Activated CD4-positive, alpha-beta T cell treated with anti-CD3 and anti-CD28 coated beads, Interleukin-2, amount 10 ng/mL, durations not matched to agents 7 days and 5 days (primary cell): ENCODE measurements at regions of chr1 and their contacts with region 1.

Region 1: GRCh38 chr1:109397538-109398342 is at the start of gene SORT1:
- DNase-seq: peak; percentile 39
- H3K4me3 Mint-ChIP-seq: peak within 1 kb of the TSS; percentile 75
- H3K27ac Mint-ChIP-seq: no peak within 1 kb of the TSS
- H3K4me1 Mint-ChIP-seq: peaks cover 10% of the 10 kb centered on the region
- H3K27me3 Mint-ChIP-seq: peaks cover 42% of the 10 kb centered on the region
- total RNA-seq, gene SORT1: 1.5 to 1.9 TPM

Region 2: DNA sequence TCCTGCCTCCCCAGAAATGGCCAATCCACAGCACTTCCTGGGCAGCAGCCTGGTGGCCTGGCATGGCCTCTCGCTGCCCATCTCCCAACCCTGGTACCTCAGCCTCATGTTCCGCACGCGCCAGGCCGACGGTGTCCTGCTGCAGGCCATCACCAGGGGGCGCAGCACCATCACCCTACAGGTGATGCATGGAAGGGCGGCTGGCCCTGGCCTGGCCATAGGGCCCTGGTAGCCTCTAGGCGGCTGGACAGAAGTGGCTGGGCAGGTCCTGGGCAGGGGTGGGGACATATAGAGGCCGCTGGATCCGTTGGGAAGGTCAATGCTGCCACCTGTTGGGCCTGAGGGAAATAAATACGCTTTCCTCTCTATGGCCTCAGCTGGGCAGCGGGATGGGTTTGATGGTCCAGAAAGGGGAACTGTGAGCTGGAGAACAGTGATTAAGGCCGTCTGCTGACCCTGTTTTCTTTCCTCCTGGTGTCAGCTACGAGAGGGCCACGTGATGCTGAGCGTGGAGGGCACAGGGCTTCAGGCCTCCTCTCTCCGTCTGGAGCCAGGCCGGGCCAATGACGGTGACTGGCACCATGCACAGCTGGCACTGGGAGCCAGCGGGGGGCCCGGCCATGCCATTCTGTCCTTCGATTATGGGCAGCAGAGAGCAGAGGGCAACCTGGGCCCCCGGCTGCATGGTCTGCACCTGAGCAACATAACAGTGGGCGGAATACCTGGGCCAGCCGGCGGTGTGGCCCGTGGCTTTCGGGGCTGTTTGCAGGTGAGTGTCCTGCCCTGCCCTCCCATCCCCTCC is 133.9 kb before region 1 on chr1:
- CTCF ChIA-PET with region 1: interaction called, 16 read pairs
- POLR2A ChIA-PET with region 1: no interaction called
- DNase-seq: peak; percentile 82
- H3K4me3 Mint-ChIP-seq: no peak overlapping the region
- H3K27ac Mint-ChIP-seq: no peak overlapping the region
- H3K4me1 Mint-ChIP-seq: peaks cover 3% of the 10 kb centered on the region
- H3K27me3 Mint-ChIP-seq: no peaks in the 10 kb centered on the region

Region 3: DNA sequence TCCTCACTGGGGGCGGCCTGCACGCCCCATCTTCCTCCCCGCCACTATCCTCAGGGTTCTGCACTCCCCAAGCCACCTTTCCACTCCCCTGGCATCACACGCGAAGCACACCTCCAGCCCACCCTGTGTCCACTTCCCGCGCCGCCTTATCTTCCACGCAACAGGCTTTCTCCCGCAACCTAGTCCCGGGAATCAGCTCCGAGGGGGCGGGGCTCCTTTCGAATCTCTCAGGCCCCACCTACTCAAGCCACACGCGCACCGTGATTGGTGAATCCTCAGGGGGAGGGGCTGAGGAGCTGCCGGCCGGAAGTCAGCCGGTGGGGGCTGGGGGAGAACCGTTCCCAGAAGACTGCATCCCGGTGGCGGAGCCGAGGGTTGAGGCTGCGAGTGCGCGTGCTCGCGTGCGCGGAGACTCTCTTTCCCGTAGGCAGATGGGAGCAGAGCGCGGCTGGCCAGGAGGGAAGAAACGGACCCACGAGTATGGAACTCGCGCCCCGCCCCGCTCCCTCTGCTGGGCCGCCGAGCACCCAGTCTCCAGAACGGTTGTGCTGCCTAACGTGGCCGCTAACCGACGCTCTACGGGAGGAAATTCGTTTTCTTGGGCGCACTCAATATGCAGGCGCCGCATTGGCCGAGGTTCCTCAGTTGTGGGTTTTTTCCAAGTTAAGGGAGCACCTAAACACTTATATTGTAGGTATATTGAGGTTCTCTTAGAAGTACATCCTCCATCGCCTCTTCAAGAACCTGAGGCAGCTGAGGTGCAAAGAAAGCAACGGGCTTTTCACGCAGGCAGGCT is 114.6 kb before region 1 on chr1 and contains the start of gene PSRC1:
- CTCF ChIA-PET with region 1: interaction called, 50 read pairs
- POLR2A ChIA-PET with region 1: no interaction called
- DNase-seq: peak; percentile 93
- H3K4me3 Mint-ChIP-seq: peak within 1 kb of the TSS; percentile 100
- H3K27ac Mint-ChIP-seq: peak within 1 kb of the TSS; percentile 96
- H3K4me1 Mint-ChIP-seq: peaks cover 32% of the 10 kb centered on the region
- H3K27me3 Mint-ChIP-seq: no peaks in the 10 kb centered on the region
- total RNA-seq, gene PSRC1: 32.7 to 34.5 TPM

Region 4: GRCh38 chr1:109385417-109385816 is 12.3 kb before region 1 on chr1:
- CTCF ChIA-PET with region 1: interaction called, 13 read pairs
- POLR2A ChIA-PET with region 1: no interaction called
- DNase-seq: no peak
- H3K4me3 Mint-ChIP-seq: no peak overlapping the region
- H3K27ac Mint-ChIP-seq: no peak overlapping the region
- H3K4me1 Mint-ChIP-seq: peaks cover 7% of the 10 kb centered on the region
- H3K27me3 Mint-ChIP-seq: peaks cover 13% of the 10 kb centered on the region

Region 5: DNA sequence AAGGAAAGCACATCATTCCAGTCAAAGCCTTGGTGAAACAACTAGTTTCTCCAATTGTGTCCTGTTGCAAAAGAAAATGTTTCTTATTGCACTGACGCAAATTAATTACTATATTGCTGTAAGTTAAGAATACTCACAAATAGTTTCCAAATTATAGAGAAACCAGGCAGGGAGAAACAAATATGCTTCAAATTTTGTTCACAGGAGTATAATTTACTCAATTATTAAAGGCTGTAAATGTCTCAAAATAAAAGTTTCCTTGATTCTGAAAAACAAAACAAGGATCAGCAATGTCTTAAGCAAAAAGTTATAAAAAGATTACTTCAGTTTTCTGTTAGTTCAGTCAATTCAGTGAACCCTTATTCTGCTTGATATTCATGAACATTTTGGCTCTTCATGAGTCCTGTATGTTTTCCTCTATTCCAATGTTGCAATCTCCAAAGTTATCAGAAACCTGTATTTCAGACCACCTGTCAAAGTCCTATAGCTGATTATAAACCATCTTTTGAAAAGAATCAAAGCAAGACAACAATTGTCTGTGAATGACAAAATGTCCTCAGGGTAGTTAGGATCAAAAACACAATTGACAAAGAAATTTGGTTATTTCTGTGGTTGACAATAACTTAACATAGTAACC is 56.9 kb after region 1 on chr1:
- CTCF ChIA-PET with region 1: no interaction called
- POLR2A ChIA-PET with region 1: no interaction called
- DNase-seq: no peak
- H3K4me3 Mint-ChIP-seq: no peak overlapping the region
- H3K27ac Mint-ChIP-seq: no peak overlapping the region
- H3K4me1 Mint-ChIP-seq: no peaks in the 10 kb centered on the region
- H3K27me3 Mint-ChIP-seq: peaks cover 43% of the 10 kb centered on the region